ENCODE measurements at regions of chr14 and their contacts with region 1.

Region 1: GRCh38 chr14:81263777-81264410 is 43.1 kb upstream of the GTF2A1 start:
- DNase-seq: no peak
- H3K4me3 ChIP-seq: no peak overlapping the region
- H3K27ac ChIP-seq: no peak overlapping the region
- H3K4me1 ChIP-seq: peaks cover 0 to under 1% (median 0%) of the 10 kb centered on the region in 3 donors
- H3K27me3 ChIP-seq: no peaks in the 10 kb centered on the region
- CTCF ChIP-seq: no peak
- POLR2A ChIP-seq: no peak

Region 2: GRCh38 chr14:81406863-81407262 is 143.0 kb after region 1 on chr14:
- intact Hi-C with region 1: no loop called
- DNase-seq: no peak
- H3K4me3 ChIP-seq: no peak overlapping the region
- H3K27ac ChIP-seq: no peak overlapping the region
- H3K4me1 ChIP-seq: peaks cover 2 to 18% (median 6%) of the 10 kb centered on the region in 3 donors
- H3K27me3 ChIP-seq: no peaks in the 10 kb centered on the region
- CTCF ChIP-seq: no peak
- POLR2A ChIP-seq: no peak

Region 3: DNA sequence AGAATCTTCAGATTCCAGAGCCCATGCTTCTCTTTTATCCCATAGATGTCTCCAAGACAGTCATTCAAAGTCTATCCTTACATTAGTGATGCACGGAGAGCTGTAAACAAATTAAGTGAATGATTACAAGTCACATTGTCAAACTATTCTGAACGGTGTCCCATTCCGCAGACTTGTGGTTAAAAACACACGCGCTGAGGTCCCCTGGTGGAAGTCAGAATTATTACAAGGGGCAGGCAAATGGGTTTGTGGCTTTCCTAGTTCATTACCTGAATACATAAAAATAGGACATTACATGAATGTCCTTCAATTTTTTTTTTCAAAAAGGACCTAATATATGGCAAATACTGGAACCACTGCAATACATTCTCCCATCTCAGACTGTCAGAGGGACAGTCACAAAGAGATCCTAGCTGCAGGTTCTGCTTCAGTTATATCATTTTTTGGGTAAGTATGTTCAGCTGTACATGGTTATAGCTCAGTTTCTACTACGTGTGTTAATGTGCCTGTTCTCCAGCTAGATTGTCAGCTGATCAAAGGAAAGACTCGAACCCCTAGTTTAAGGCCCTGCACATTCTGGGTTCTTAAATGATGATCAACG is 189.4 kb after region 1 on chr14:
- intact Hi-C with region 1: loop called (anchors 2 kb)
- DNase-seq: no peak
- H3K4me3 ChIP-seq: peak overlapping the region in 1 of 4 donors; percentile 33
- H3K27ac ChIP-seq: no peak overlapping the region
- H3K4me1 ChIP-seq: peaks cover 0 to 28% (median 15%) of the 10 kb centered on the region in 3 donors
- H3K27me3 ChIP-seq: no peaks in the 10 kb centered on the region
- CTCF ChIP-seq: peak; percentile 41 to 95 (median 92)
- POLR2A ChIP-seq: no peak